Panc1 (cell line): ENCODE measurements at regions of chr19 and their contacts with region 1.

Region 1: DNA sequence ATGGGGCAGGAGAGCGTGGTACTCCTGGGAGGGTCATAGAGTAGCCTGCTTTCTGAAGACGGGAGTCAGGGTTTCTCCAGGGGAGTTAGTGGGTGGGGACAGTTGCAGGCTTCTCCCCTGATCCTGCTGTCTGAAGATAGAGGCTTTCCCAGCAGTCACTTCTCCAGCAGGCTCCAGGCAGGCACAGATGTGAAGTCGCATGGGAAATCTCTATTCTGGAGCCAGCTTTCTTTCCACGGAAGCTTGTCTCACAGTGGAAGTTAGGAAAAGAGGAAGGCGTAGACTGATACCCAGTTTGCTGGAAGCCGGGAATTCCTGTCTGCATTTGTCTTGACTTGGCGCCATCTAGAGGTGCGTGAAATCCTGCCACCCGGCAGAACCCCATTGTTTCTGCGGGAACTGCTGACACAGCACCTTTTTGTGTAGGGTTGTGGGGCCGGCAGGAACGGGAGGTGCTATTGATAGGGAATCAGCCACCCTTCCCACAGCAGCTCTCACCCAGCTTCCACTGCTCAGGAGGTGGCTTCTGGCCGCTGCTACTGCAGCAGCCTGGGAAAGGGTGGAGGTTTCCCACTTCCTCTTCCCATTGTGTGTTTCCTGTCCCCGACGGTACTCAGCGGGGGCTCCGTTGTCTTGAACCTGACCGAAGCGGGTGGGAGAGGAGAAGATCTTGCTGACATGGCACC is 28.5 kb upstream of the NPAS1 start:
- DNase-seq: peak; percentile 27
- ATAC-seq: peak; percentile 73
- H3K4me3 ChIP-seq: no peak overlapping the region
- H3K27ac ChIP-seq: peak overlapping the region; percentile 39; the same call in 1 of the 2 replicates
- H3K4me1 ChIP-seq: peaks cover 7% of the 10 kb centered on the region
- H3K27me3 ChIP-seq: no peaks in the 10 kb centered on the region
- CTCF ChIP-seq: peak; percentile 81; the same call in 1 of the 2 replicates

Region 2: DNA sequence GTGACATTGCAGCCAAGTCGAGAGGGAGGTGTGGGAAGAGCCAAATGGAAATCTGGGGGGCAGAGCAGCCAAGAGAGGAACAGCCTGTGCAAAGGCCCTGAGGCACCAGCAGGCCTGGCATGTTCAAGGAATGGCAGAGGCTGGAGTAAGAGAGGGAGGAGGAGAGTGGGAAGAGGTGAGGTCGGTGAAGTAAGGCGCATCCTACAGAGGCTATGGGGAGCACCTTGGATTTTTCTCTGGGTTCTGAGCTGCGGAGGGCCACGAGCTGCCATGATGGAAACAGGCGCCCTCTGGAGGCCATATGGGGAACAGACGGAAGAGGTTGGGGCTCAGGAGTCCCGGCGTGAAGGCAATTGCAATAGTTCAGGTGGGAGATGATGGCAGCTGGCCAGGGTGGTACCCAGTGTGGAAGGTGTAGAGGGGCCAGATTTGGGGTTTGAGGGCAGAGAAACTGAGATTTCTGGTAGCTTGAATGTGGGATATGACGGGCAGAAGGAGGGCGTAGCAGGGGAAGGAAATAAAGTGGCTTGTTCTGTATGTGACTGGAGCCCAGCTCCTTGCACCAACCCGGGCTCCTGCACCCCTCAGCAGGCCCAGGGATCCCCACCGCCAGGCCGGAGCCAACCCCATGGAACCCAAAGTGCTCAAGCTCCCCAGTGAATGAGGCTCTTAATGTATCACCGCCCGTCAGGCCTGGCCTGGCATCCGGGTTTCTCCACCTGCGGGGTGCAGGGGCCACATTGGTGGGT is 224.4 kb before region 1 on chr19:
- CTCF ChIA-PET with region 1: no interaction called
- POLR2A ChIA-PET with region 1: no interaction called
- in situ Hi-C with region 1: no loop called
- intact Hi-C with region 1: no loop called
- DNase-seq: no peak
- ATAC-seq: peak; percentile 88
- H3K4me3 ChIP-seq: no peak overlapping the region
- H3K27ac ChIP-seq: no peak overlapping the region
- H3K4me1 ChIP-seq: no peaks in the 10 kb centered on the region
- H3K27me3 ChIP-seq: no peaks in the 10 kb centered on the region
- CTCF ChIP-seq: peak; percentile 88

Region 3: GRCh38 chr19:46850228-46851203 is 140.6 kb before region 1 on chr19 and contains the start of gene AP2S1:
- CTCF ChIA-PET with region 1: interaction called, 16 read pairs
- POLR2A ChIA-PET with region 1: no interaction called
- in situ Hi-C with region 1: no loop called
- intact Hi-C with region 1: no loop called
- DNase-seq: peak; percentile 94
- ATAC-seq: peak; percentile 99
- H3K4me3 ChIP-seq: peak within 1 kb of the TSS; percentile 88 to 93
- H3K27ac ChIP-seq: peak within 1 kb of the TSS; percentile 88
- H3K4me1 ChIP-seq: peaks cover 7% of the 10 kb centered on the region; the same call in 1 of the 2 replicates
- H3K27me3 ChIP-seq: no peaks in the 10 kb centered on the region
- CTCF ChIP-seq: no peak
- total RNA-seq, gene AP2S1: 146 TPM

Region 4: DNA sequence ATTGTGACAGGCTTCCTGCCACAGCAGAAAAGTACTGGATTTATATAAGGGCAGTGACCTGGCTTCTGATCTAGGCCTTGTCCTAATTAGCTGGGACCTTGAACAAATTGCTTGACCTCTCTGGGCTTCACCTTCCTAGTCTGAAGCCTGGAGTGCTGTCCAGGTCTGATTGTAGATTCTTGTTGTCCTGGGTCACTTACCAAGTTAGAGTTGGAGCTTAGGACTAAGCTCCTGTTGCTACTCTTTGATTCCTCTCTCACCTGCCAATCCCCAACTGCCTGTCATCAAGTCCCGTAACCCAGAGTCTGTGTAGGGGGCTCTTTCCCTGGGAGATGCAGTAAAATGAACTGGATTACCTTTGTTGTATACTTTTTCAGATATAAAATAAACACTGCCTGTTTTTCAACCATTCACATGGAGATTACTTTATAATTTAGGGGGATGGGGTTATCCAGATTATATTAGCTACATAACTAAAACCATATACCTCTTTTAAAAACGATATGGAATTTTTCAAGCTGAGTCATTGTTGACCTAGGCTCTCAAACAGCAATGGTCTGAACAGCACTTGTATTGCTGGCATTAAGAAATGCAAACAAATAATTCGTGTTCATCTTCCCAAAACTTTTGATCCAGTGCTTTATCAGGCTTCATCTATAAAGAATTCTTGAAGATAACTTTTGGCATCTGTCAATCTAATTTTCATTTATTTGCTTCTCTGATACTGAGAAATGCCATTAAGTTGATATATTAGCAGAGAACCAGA is 124.6 kb before region 1 on chr19:
- CTCF ChIA-PET with region 1: no interaction called
- POLR2A ChIA-PET with region 1: no interaction called
- in situ Hi-C with region 1: no loop called
- intact Hi-C with region 1: loop called (anchors 5 kb)
- DNase-seq: no peak
- ATAC-seq: peak; percentile 70
- H3K4me3 ChIP-seq: peak overlapping the region in 1 of 2 experiments; percentile 5; a peak in 1 of 4 replicates
- H3K27ac ChIP-seq: peak overlapping the region; percentile 94
- H3K4me1 ChIP-seq: peaks cover 63% of the 10 kb centered on the region
- H3K27me3 ChIP-seq: no peaks in the 10 kb centered on the region
- CTCF ChIP-seq: no peak

Region 5: DNA sequence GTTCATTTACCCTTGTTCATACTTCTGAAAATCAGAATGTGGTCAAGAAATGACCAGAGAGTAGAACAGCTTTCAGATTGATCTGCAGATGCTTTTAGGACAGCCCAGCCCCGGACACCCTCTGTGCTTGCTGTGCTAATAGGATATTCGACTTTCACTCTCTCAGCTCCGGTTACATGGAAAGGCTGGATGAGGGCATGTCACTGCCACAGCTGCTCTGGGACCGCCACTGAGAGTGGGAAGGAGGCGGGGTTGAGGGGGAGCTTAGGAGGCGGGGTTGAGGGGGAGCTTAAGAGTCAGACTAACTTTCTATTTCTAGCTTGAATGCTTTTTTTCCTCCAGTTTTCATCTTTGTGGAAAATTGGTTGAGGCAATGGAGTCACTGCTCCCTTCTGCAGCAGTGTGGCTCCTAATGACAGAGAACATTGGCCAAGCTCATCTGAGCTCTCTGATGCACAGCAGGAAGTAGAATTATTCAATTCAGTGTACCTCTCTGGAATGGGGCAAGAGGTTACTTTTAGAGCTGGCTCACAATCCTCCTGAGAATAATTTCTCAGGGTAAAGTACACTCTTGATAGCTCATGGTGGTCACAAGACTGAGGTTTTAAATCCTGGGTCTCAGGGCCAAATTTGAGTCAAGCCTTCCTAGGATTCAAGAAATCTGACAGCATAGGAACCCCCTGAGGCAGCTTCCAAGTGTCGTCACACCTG is 46.1 kb before region 1 on chr19:
- CTCF ChIA-PET with region 1: no interaction called
- POLR2A ChIA-PET with region 1: no interaction called
- in situ Hi-C with region 1: no loop called
- intact Hi-C with region 1: no loop called
- DNase-seq: no peak
- ATAC-seq: no peak
- H3K4me3 ChIP-seq: no peak overlapping the region
- H3K27ac ChIP-seq: no peak overlapping the region
- H3K4me1 ChIP-seq: 0 out of 2 replicates have a peak, but pooled peaks cover 3% of the 10 kb centered on the region
- H3K27me3 ChIP-seq: no peaks in the 10 kb centered on the region
- CTCF ChIP-seq: no peak

Region 6: DNA sequence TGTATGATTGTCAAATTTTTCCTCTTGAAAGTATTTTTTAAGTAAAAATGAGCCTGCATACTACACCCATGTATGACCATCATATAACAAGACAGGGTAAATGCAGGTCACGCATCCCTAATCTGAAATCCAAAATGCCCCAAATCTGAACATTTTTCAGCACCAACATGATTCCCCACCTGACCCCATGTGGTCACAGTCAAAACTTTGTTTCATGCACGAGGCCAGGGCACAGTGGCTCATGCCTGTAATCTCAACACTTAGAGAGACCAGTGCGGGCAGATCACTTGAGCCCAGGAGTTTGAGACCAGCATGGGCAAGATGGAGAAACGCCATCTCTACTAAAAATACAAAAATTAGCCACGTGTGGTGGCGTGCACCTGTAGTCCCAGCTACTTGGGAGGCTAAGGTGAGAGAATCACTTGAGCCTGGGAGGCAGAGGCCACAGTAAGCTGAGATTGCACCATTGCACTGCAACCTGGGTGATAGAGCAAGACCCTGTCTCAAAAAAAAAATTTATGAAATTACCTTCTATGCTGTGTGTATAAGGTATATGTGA is 35.2 kb before region 1 on chr19:
- CTCF ChIA-PET with region 1: no interaction called
- POLR2A ChIA-PET with region 1: interaction called, 15 read pairs
- in situ Hi-C with region 1: no loop called
- intact Hi-C with region 1: no loop called
- DNase-seq: no peak
- ATAC-seq: no peak
- H3K4me3 ChIP-seq: no peak overlapping the region
- H3K27ac ChIP-seq: no peak overlapping the region
- H3K4me1 ChIP-seq: peaks cover 21% of the 10 kb centered on the region
- H3K27me3 ChIP-seq: no peaks in the 10 kb centered on the region
- CTCF ChIP-seq: no peak